Transverse colon (tissue), 4 donors: ENCODE measurements at regions of chr5 and their contacts with region 1.

Region 1: GRCh38 chr5:141412854-141413539 is at the start of gene PCDHGA10:
- DNase-seq: peak; percentile 62
- H3K4me3 ChIP-seq: peak within 1 kb of the TSS in 3 of 4 donors; percentile 16 to 44 (median 18)
- H3K27ac ChIP-seq: peak within 1 kb of the TSS in 1 of 4 donors; percentile 2
- H3K4me1 ChIP-seq: no peaks in the 10 kb centered on the region
- H3K27me3 ChIP-seq: peaks cover 8% of the 10 kb centered on the region
- CTCF ChIP-seq: peak; percentile 23 to 54 (median 41)
- EP300 ChIP-seq: no peak
- POLR2A ChIP-seq: no peak
- total RNA-seq, gene PCDHGA10: 4.0 to 6.5 (median 6.1) TPM

Region 2: GRCh38 chr5:141557681-141558136 is 144.7 kb after region 1 on chr5:
- in situ Hi-C with region 1: loop called in 2 of 4 experiments (anchors 10 kb)
- intact Hi-C with region 1: loop called (anchors 10 kb)
- DNase-seq: peak; percentile 83
- H3K4me3 ChIP-seq: peak overlapping the region in 1 of 4 donors; percentile 13
- H3K27ac ChIP-seq: peak overlapping the region; percentile 86 to 89 (median 88)
- H3K4me1 ChIP-seq: peaks cover 10 to 26% (median 15%) of the 10 kb centered on the region in 4 donors
- H3K27me3 ChIP-seq: no peaks in the 10 kb centered on the region
- CTCF ChIP-seq: peak; percentile 75 to 90 (median 81)
- EP300 ChIP-seq: no peak
- POLR2A ChIP-seq: no peak